ENCODE measurements at regions of chr1 and their contacts with region 1.

Region 1: DNA sequence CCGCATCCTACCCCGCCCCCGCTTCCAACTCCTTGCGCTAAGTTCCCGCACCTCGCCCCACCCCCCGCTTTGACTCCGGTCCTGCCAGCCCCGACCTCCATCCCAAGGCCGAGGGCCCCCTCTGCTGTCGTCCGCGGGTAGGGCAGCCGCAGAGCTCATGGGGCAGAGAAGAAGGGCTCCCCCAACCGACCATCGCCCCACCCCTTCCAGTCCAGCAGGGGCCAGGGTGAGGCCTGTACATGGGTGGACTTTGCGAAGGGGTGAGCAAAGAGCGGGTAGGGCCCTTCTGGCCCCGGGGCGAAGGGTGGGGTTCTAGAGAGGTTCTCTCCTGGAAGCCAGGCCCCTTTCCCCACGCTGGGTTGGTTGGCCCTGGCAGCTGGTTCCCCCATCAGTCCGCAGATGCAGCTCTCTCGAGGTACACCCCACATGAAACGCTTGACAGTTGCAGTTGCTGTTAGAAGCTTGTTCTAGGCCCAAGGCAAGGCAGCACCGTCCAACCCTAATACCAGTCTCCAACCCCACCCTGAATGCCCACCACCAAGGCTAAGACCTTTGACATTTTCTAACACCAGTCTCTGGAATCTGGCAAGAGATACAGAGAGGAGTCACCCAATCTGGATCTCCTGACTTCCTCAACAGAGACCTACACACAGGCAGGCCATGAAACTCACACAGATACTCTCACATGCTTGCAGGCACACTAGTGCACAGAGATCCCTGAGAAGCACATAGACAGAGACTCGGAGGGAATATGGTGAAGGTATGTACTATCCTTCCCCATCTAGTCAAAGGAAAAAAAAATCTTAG is 25.3 kb upstream of the ADGRB2 start:
- DNase-seq: peak; percentile 93 to 98 (median 94)
- ATAC-seq: peak; percentile 84 to 94 (median 89)
- H3K4me3 ChIP-seq: peak overlapping the region; percentile 46 to 78 (median 65)
- H3K27ac ChIP-seq: peak overlapping the region in 8 of 12 donors; percentile 70 to 87 (median 76)
- H3K4me1 ChIP-seq: peaks cover 0 to 15% (median 3%) of the 10 kb centered on the region in 12 donors
- H3K27me3 ChIP-seq: no peaks in the 10 kb centered on the region
- CTCF ChIP-seq: peak; percentile 64 to 98 (median 82)
- POLR2A ChIP-seq: peak in 1 of 2 donors; percentile 17

Region 2: GRCh38 chr1:31394628-31395193 is 394.8 kb before region 1 on chr1:
- intact Hi-C with region 1: loop called in 1 of 10 experiments (anchors 10 kb)
- DNase-seq: peak; percentile 76 to 90 (median 83)
- ATAC-seq: peak; percentile 87 to 97 (median 96)
- H3K4me3 ChIP-seq: peak overlapping the region; percentile 11 to 58 (median 36)
- H3K27ac ChIP-seq: peak overlapping the region in 9 of 12 donors; percentile 6 to 67 (median 49)
- H3K4me1 ChIP-seq: peaks cover 0 to 12% (median 5%) of the 10 kb centered on the region in 12 donors
- H3K27me3 ChIP-seq: peaks cover 0 to 3% (median 0%) of the 10 kb centered on the region in 9 donors
- CTCF ChIP-seq: peak; percentile 79 to 94 (median 91)
- POLR2A ChIP-seq: no peak

Region 3: GRCh38 chr1:31575369-31576140 is 213.9 kb before region 1 on chr1:
- intact Hi-C with region 1: loop called in 1 of 10 experiments (anchors 5 kb)
- DNase-seq: no peak
- ATAC-seq: no peak
- H3K4me3 ChIP-seq: peak overlapping the region in 11 of 12 donors; percentile 64 to 92 (median 84)
- H3K27ac ChIP-seq: peak overlapping the region; percentile 33 to 99 (median 94)
- H3K4me1 ChIP-seq: peaks cover 18 to 62% (median 47%) of the 10 kb centered on the region in 12 donors
- H3K27me3 ChIP-seq: no peaks in the 10 kb centered on the region
- CTCF ChIP-seq: no peak
- POLR2A ChIP-seq: no peak

Region 4: DNA sequence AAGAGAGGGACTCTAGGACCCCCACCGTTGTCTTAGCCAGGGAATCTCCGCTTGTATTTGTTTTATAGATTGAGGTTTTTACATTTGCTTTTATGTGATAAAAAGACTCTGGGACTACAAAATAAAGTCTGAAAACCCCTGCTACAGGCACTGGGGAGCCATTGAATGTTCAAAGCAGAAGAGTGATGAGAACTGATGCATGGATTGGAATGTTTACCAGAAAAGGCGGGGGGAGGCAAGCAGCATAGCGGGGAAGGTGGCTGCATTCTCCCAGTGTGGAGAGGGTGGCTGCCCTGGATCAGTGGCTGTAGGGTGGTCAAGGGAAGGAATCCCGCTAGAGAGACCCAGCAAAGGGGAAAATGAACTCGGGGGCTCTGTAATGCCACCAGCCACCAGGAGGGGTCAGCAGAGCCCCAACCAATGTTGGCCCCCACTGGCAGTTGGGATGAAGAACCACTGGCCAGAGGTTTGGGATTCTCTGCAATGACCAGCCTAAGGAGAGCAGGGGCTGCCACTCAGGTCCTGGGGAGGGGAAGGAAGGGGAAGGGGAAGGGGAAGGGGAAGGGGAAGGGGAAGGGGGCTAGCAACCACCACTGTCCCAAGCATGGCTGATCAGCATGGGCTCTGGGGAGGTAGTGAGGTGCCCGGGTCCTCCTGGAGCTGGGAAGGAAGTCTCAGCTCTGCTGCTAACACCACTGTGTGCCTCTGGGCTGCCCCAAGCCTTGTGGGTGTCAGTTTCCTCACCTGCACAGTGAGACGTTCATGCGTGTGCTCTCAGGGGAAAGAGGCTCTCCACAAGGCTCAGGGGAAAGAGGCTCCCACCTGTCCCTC is 125.6 kb before region 1 on chr1:
- intact Hi-C with region 1: loop called (anchors 1 to 5 kb)
- DNase-seq: peak; percentile 50 to 76 (median 58)
- ATAC-seq: peak; percentile 23 to 55 (median 42)
- H3K4me3 ChIP-seq: no peak overlapping the region
- H3K27ac ChIP-seq: no peak overlapping the region
- H3K4me1 ChIP-seq: peaks cover 0 to 25% (median 10%) of the 10 kb centered on the region in 12 donors
- H3K27me3 ChIP-seq: no peaks in the 10 kb centered on the region
- CTCF ChIP-seq: peak; percentile 85 to 96 (median 88)
- POLR2A ChIP-seq: no peak

Region 5: DNA sequence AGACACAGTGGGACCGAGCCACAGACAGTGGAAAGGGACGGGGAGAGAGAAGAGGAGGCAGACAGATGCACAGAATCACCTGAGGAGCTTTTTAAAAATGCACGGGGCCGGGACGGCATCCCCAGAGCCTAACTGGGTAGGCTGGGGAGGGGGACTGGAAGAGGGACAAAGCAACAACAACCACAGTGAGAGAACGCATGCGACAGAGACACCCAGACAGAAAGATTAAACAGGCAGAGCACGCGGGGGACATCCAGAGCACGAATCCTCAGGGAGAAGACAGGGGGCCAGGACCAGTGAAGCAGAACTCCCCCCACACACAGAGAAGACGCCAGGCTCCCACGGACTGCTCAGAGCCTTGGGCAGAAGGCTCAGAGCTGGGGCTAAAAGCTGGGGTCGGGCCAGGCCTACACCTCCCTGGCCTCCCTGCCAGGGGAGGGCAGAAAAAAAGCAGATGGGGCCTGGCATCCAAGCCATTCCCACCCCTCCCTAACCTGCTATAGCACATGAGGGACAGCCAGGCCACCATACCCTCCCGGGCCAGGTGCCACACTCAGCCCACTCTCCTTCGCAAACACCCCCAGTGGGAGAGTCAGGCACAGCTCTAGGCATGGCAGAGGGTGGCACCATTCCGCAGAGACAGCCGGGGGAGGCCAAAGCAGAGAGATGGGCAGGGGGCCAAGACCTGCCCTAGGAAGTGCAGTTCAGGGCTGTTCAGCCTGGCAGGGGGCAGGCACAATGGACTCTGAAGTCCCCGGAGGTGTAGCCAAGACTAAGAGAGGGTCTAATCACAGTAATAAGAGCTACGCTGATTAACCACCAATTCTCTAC is 55.9 kb before region 1 on chr1:
- intact Hi-C with region 1: no loop called
- DNase-seq: peak in 1 of 5 donors; percentile 14
- ATAC-seq: peak in 1 of 4 donors; percentile 39
- H3K4me3 ChIP-seq: no peak overlapping the region
- H3K27ac ChIP-seq: no peak overlapping the region
- H3K4me1 ChIP-seq: no peaks in the 10 kb centered on the region
- H3K27me3 ChIP-seq: no peaks in the 10 kb centered on the region
- CTCF ChIP-seq: no peak
- POLR2A ChIP-seq: no peak

Region 6: DNA sequence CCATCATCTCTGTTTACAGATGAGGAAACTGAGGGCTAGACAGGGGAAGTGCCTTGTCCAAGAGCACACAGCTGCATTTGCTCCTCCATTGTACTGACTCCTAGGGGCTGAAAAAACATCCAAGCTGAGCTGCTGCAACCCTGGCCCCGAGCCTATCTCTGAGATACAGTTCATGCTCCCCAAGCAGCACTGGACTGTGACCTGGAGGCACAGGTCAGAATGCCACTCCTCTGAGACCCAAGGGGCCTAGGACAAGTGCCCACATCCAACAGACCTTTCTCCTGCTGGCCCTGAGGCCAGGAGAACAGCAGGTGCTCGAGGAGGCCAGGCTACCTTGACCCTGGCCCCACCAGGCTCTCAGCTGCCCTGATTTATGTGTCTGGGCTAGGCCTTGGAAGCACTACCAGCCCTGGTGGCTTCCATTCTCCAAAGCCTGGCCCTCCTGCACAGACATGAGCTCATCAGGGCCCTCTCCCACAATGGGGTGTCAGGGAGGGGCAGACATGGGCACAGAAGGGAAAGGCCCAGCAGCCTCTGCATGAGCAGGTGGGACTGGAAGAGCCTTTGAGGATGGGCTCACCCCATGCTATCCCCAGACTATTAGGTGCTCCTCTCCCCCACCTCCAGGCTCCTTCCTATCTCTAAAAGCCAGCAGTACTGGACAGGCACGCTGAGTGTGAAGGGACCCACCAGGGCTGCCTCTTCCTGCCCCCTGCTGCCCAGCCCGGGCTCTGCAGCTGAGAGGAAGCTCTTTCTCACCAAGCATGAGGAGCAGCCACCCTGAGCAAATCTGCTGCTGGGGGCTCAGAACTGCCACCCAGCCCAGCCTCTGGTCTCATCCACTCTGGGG is 44.1 kb before region 1 on chr1:
- intact Hi-C with region 1: loop called in 1 of 10 experiments (anchors 5 kb)
- DNase-seq: peak; percentile 50 to 80 (median 69)
- ATAC-seq: peak in 3 of 4 donors; percentile 66 to 81 (median 75)
- H3K4me3 ChIP-seq: no peak overlapping the region
- H3K27ac ChIP-seq: no peak overlapping the region
- H3K4me1 ChIP-seq: peaks cover 0 to 39% (median 8%) of the 10 kb centered on the region in 12 donors
- H3K27me3 ChIP-seq: no peaks in the 10 kb centered on the region
- CTCF ChIP-seq: peak; percentile 59 to 84 (median 69)
- POLR2A ChIP-seq: no peak

Region 7: DNA sequence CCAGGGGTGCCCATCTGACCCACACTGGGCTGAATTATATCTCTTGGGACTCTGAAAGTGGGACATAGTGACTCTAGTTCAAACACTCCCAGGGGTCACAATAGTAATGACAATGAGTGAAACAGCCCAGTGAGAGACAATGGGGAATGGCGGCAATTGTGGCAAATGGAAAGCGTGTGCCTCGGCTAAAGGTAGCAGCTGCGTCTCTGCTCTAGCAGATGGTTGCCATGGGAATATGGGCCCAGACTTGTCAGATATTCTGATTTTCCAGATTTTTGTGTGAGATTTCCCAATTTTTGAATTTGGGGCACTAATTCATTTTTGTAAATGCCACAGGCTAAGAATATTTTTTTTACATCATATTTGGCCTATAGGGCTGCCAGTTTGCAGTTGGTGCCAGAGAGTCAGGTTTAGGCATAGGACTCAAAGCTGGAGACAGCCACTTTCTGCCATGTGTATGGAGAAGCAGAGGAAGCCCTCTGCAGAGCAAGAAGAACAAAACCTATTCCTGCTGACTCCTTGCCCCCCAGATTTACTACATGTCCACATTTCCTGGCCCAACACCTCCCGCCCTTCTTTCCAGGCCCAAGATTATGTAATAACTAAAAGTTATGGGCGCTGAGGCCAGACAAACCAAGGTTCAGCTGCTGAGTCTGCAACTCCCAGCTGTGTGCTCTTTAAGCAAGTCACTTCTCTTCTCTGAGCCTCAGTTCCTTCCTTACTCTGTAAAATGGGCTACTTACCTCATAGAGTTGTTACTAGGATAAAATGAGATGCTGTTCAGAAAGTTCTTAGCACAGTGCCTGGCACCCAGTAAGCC is 170.3 kb after region 1 on chr1:
- intact Hi-C with region 1: loop called in 4 of 10 experiments (anchors 10 kb)
- DNase-seq: no peak
- ATAC-seq: no peak
- H3K4me3 ChIP-seq: no peak overlapping the region
- H3K27ac ChIP-seq: peak overlapping the region in 1 of 12 donors; percentile 70
- H3K4me1 ChIP-seq: peaks cover 10 to 79% (median 20%) of the 10 kb centered on the region in 12 donors
- H3K27me3 ChIP-seq: no peaks in the 10 kb centered on the region
- CTCF ChIP-seq: no peak
- POLR2A ChIP-seq: no peak

Measured in heart left ventricle (tissue), 16 donors.